Endothelial cell of umbilical vein (primary cell): ENCODE measurements at regions of chr3 and their contacts with region 1.

Region 1: GRCh38 chr3:150469031-150469942 is 61.2 kb downstream of the TSC22D2 start:
- DNase-seq: peak; percentile 88
- H3K4me3 ChIP-seq: peak overlapping the region in 1 of 3 experiments; percentile 15
- H3K27ac ChIP-seq: peak overlapping the region; percentile 83
- H3K4me1 ChIP-seq: peaks cover 28% of the 10 kb centered on the region
- H3K27me3 ChIP-seq: no peaks in the 10 kb centered on the region
- CTCF ChIP-seq: no peak
- POLR2A ChIP-seq: no peak

Region 2: DNA sequence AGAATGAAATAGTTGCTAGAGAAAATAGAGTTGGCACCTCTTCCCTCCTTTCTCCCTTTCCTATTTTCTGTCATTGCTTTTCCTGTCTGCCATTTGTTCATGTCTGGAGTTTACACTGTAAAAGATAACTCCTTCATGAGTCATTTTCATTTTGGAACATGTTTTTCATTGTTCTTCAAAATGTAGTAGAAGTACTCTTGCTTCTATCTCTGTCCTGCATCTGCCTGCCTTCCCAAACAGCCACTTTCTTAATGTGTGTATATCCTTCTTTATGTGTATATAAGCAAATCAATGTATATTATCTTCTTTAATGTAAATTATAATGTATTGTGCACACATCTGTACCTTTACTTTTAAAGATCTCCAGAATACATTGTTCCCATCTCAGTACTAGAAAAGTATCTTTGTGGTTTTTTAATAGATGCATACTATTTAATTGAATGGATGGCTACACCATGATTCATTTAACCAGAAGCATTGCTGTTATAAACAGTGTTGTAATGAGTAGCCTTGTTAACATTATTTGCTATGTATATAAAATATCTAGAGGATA is 20.0 kb before region 1 on chr3:
- CTCF ChIA-PET with region 1: no interaction called
- POLR2A ChIA-PET with region 1: no interaction called
- dilution Hi-C with region 1: no loop called
- intact Hi-C with region 1: loop called (anchors 2 kb)
- DNase-seq: peak; percentile 87
- H3K4me3 ChIP-seq: peak overlapping the region in 1 of 3 experiments; percentile 30
- H3K27ac ChIP-seq: peak overlapping the region; percentile 84
- H3K4me1 ChIP-seq: peaks cover 54% of the 10 kb centered on the region
- H3K27me3 ChIP-seq: no peaks in the 10 kb centered on the region
- CTCF ChIP-seq: no peak
- POLR2A ChIP-seq: no peak